ENCODE measurements at regions of chr10 and their contacts with region 1.

Region 1: DNA sequence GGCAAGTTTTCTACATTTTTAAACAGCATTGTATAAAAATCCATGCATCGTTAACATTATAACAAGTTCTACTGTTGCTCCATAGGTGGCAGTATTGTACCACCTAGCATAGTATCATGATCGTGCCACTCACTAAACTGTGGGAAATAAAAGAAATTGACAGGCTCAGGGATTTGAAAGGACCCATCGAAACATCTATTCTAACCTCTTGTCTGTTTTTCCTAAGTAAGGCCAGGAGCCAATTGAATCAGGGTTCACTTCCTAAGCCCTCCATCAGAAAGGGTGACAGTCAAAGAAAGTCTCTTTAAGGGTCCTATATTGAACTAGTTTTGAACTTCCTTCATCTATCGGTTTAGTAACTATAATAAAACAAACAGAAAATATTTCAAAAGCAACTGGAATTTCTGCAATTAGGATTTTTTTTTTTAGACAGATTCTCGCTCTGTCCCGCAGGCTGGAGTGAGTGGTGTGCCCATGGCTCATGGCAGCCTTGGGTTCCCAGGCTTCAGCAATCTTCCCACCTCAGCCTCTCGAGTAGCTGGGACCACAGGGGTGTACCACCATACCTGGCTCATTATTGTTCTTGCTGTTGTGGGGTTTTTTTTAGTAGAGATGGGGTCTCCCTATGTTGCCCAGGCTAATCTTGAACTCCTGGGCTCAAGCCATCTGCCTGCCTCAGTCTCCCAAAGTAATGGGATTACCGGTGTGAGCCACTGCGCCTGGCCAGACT is 9.4 kb downstream of the HACD1 start:
- DNase-seq: no peak
- H3K4me3 Mint-ChIP-seq: no peak overlapping the region
- H3K27ac Mint-ChIP-seq: no peak overlapping the region
- H3K4me1 Mint-ChIP-seq: peaks cover 7% of the 10 kb centered on the region
- H3K27me3 Mint-ChIP-seq: peaks cover 14% of the 10 kb centered on the region

Region 2: DNA sequence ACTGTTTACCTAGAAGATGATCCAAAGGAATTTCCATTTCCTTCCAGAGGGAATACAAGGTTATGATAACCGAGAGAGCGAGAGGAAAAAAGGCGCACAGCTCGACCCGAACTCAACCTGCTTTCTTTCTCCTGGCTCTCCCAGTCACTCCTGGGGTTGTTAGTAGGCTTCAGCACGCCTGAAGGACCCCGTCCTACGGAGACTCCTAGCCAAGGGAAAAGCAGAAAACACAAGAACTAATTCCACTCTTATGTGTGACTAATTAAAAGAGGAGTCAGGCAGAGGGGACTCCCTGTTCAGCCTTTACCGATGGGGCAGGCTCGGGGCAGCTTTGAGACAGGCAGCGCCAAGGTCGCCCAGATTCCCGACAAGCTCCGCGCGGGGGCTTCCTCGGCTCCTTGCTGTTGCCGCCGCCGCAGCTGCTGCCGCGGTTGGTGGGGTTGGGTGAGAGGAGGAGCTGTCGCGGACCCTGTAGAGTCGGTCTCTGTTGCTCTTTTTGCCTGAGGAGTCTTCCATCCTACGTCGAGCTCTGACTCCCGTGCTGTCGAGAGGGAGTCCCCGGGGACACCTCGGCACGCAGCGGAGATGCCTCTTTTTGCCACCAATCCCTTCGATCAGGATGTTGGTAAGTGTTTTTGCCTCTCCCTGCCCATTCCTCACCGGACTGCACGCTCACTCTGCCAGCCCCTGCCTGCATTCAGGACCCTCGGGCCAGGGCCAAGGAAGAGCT is 36.2 kb after region 1 on chr10 and contains the start of gene STAM:
- intact Hi-C with region 1: no loop called
- DNase-seq: peak; percentile 87
- H3K4me3 Mint-ChIP-seq: peak within 1 kb of the TSS; percentile 99
- H3K27ac Mint-ChIP-seq: peak within 1 kb of the TSS; percentile 100
- H3K4me1 Mint-ChIP-seq: peaks cover 55% of the 10 kb centered on the region
- H3K27me3 Mint-ChIP-seq: no peaks in the 10 kb centered on the region
- total RNA-seq, gene STAM: 23.3 and 26.8 TPM in 2 replicates

Region 3: DNA sequence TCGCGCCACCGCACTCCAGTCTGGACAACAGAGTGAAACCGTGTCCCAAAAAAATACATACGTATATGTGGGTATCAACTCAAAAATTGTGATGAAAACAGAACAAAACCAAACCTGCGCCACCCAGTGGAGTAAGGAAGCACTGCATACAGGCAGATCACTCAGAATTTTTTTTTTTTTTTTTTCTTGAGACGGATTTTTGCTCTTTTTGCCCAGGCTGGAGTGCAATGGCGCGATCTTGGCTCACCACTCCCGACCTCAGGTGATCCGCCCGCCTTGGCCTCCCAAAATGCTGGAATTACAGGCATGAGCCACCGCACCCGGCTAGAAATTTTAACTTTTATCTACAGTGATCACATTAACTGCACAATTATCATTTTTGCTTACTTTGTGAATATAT is 135.2 kb after region 1 on chr10:
- intact Hi-C with region 1: loop called (anchors 1 kb)
- DNase-seq: peak; percentile 37
- H3K4me3 Mint-ChIP-seq: no peak overlapping the region
- H3K27ac Mint-ChIP-seq: no peak overlapping the region
- H3K4me1 Mint-ChIP-seq: peaks cover 14% of the 10 kb centered on the region
- H3K27me3 Mint-ChIP-seq: no peaks in the 10 kb centered on the region

Region 4: DNA sequence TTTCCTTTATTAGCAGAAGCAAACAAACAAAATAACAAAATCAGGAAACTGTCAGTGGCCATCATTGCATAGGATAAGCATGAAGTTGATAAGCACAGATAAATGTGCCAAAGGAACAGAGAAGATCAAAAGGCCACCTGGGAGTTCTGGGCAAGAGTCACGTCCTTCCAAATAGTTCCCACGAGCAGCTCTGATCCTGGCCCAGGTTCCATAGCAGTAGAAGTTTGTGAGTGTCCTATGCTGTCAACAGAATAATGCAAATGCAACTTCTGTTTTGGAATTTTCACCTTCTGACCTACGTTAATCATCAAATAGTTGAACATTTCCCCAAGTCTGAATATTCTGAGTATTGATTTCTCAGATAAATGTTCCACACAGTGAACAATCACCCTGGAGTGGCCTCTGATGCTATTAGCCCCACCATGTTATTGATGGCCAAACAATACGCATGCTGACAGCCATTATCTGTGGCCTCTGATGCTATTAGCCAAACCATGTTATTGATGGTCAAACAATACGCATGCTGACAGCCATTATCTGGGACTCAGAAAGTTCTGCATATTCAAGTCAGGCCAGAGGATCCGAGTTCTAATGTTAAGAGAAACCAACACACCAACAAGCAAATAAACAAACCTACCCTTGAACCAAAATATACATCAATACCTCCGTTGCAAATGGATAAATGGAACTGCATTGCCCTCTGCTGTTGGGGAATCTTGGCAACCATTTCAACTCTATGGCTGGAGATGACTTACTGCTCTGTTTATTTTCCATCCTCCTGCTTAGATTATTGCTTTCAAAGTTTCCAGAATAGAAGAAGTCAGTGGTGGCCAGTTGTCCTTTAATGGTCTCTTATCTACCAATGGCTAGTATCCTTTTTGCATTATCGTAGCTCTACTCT is 264.7 kb after region 1 on chr10:
- intact Hi-C with region 1: loop called (anchors 1 kb)
- DNase-seq: no peak
- H3K4me3 Mint-ChIP-seq: no peak overlapping the region
- H3K27ac Mint-ChIP-seq: no peak overlapping the region
- H3K4me1 Mint-ChIP-seq: no peaks in the 10 kb centered on the region
- H3K27me3 Mint-ChIP-seq: peaks cover 2% of the 10 kb centered on the region

Region 5: DNA sequence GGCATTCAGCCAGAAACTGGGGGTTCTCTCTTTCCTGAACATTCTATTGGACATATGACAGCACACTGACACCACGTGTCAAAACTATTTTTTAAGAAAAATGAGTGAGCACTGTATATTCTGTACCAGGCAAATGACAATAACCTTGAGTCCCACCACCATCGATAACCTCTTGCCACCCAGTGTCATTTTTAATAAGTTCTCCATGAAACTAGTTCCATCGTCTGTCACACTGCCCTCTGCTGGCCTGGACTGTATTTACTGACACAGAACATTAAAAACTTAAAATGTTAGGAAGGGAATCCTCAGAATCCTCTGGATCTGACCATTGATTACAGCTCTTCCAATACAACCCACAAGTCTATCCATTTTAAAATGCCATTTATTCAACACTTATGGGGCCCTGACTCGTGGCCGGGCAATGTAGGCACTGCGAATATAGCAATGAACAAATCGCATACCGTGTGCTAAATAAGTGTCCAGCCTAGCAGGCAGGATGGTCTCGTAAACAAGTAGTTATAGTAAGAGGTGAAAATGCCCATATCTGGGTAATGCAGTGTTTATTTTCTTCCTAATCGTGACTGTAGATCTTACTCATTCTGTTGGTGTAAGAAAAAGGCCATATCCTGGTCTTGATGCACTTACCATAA is 496.6 kb after region 1 on chr10:
- intact Hi-C with region 1: loop called (anchors 1 kb)
- DNase-seq: no peak
- H3K4me3 Mint-ChIP-seq: no peak overlapping the region
- H3K27ac Mint-ChIP-seq: no peak overlapping the region
- H3K4me1 Mint-ChIP-seq: no peaks in the 10 kb centered on the region
- H3K27me3 Mint-ChIP-seq: no peaks in the 10 kb centered on the region

Region 6: GRCh38 chr10:18238870-18239485 is 631.2 kb after region 1 on chr10:
- intact Hi-C with region 1: loop called (anchors 1 kb)
- DNase-seq: no peak
- H3K4me3 Mint-ChIP-seq: no peak overlapping the region
- H3K27ac Mint-ChIP-seq: no peak overlapping the region
- H3K4me1 Mint-ChIP-seq: no peaks in the 10 kb centered on the region
- H3K27me3 Mint-ChIP-seq: peaks cover 2% of the 10 kb centered on the region